CD8-positive, alpha-beta T cell (primary cell): ENCODE measurements at regions of chr7 and their contacts with region 1.

Region 1: GRCh38 chr7:17940302-17940883 is at the start of gene SNX13:
- DNase-seq: peak; percentile 75 to 95 (median 91)
- ATAC-seq: peak; percentile 93
- H3K4me3 ChIP-seq: peak within 1 kb of the TSS; percentile 67 to 94
- H3K4me3 Mint-ChIP-seq: peak within 1 kb of the TSS; percentile 98
- H3K27ac ChIP-seq: peak within 1 kb of the TSS; percentile 95 to 98
- H3K27ac Mint-ChIP-seq: peak within 1 kb of the TSS; percentile 99
- H3K4me1 ChIP-seq: peaks cover 29% of the 10 kb centered on the region
- H3K4me1 Mint-ChIP-seq: peaks cover 52% of the 10 kb centered on the region
- H3K27me3 ChIP-seq: no peaks in the 10 kb centered on the region
- H3K27me3 Mint-ChIP-seq: no peaks in the 10 kb centered on the region
- CTCF ChIP-seq: no peak
- total RNA-seq, gene SNX13: 22.0 to 23.9 TPM

Region 2: GRCh38 chr7:16420649-16421332 is 1519.6 kb before region 1 on chr7:
- CTCF ChIA-PET with region 1: no interaction called
- POLR2A ChIA-PET with region 1: no interaction called
- intact Hi-C with region 1: loop called (anchors 5 to 10 kb)
- DNase-seq: peak; percentile 46 to 95 (median 82)
- ATAC-seq: peak; percentile 92
- H3K4me3 ChIP-seq: peak overlapping the region; percentile 67 to 71
- H3K4me3 Mint-ChIP-seq: peak overlapping the region; percentile 87
- H3K27ac ChIP-seq: peak overlapping the region; percentile 68 to 89
- H3K27ac Mint-ChIP-seq: peak overlapping the region; percentile 93
- H3K4me1 ChIP-seq: peaks cover 15% of the 10 kb centered on the region
- H3K4me1 Mint-ChIP-seq: peaks cover 29% of the 10 kb centered on the region
- H3K27me3 ChIP-seq: no peaks in the 10 kb centered on the region
- H3K27me3 Mint-ChIP-seq: no peaks in the 10 kb centered on the region
- CTCF ChIP-seq: no peak

Region 3: GRCh38 chr7:17144322-17144721 is 796.1 kb before region 1 on chr7:
- CTCF ChIA-PET with region 1: no interaction called
- POLR2A ChIA-PET with region 1: no interaction called
- intact Hi-C with region 1: loop called in 1 of 2 experiments (anchors 2 kb)
- DNase-seq: peak in 8 of 9 experiments; percentile 25 to 68 (median 50)
- ATAC-seq: peak; percentile 76
- H3K4me3 ChIP-seq: no peak overlapping the region
- H3K4me3 Mint-ChIP-seq: peak overlapping the region; percentile 62
- H3K27ac ChIP-seq: no peak overlapping the region
- H3K27ac Mint-ChIP-seq: peak overlapping the region; percentile 53
- H3K4me1 ChIP-seq: peaks cover 26% of the 10 kb centered on the region
- H3K4me1 Mint-ChIP-seq: peaks cover 43% of the 10 kb centered on the region
- H3K27me3 ChIP-seq: no peaks in the 10 kb centered on the region
- H3K27me3 Mint-ChIP-seq: no peaks in the 10 kb centered on the region
- CTCF ChIP-seq: no peak

Region 4: DNA sequence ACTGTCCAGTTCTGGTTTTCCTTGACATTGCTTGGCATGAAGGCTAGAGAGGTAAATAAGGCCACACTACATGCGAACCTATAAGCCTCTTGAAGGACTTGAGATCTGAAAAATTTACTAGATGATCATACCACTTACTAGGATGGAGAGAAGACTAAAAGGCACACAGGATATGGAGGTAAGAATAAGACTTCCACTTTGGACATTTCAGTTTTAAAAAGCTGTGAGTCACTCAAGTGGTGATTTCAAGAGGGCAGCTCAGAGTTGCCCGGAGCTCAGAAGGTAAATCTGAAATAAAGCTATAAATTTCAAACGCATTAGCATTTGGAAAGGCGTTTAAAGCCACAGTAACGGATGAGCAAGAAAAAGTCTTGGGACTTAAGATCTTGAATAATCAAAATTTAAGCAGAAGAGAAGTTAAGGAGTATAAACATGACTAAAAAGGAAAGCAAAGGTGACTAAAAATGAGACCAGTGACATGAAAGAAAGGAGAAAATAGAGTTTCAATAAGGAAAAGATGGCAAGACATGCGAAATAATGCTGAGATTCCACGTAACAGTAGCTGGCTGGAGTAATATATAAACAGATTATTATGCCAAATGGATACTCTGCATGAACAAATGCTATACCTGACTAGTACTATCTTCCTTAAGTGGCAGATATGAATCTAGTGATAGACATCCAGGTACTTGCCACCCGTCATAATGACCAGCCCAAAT is 68.4 kb before region 1 on chr7:
- CTCF ChIA-PET with region 1: no interaction called
- POLR2A ChIA-PET with region 1: no interaction called
- intact Hi-C with region 1: loop called in 1 of 2 experiments (anchors 10 kb)
- DNase-seq: no peak
- ATAC-seq: no peak
- H3K4me3 ChIP-seq: no peak overlapping the region
- H3K4me3 Mint-ChIP-seq: no peak overlapping the region
- H3K27ac ChIP-seq: no peak overlapping the region
- H3K27ac Mint-ChIP-seq: no peak overlapping the region
- H3K4me1 ChIP-seq: no peaks in the 10 kb centered on the region
- H3K4me1 Mint-ChIP-seq: no peaks in the 10 kb centered on the region
- H3K27me3 ChIP-seq: no peaks in the 10 kb centered on the region
- H3K27me3 Mint-ChIP-seq: no peaks in the 10 kb centered on the region
- CTCF ChIP-seq: no peak

Region 5: DNA sequence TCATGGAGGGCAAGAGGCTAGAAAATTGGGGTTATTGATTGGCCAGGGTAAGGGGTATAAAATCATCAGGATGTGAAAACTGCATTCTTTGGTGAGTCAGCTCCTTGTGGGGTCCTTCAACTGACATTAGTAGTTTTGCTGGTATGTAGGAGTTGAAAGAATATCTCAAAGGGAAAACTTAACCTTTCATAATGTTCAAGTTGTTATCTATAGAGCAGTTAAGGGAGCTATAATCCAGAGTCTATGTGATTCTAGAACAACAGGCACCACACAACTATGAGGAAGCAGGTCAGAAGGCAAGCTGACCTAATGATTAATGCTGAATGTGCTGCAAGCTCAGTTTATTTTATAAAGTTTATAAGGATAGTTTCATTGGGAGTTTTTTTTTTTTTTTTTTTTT is 73.5 kb after region 1 on chr7:
- CTCF ChIA-PET with region 1: no interaction called
- POLR2A ChIA-PET with region 1: no interaction called
- intact Hi-C with region 1: no loop called
- DNase-seq: no peak
- ATAC-seq: no peak
- H3K4me3 ChIP-seq: no peak overlapping the region
- H3K4me3 Mint-ChIP-seq: no peak overlapping the region
- H3K27ac ChIP-seq: no peak overlapping the region
- H3K27ac Mint-ChIP-seq: no peak overlapping the region
- H3K4me1 ChIP-seq: no peaks in the 10 kb centered on the region
- H3K4me1 Mint-ChIP-seq: no peaks in the 10 kb centered on the region
- H3K27me3 ChIP-seq: no peaks in the 10 kb centered on the region
- H3K27me3 Mint-ChIP-seq: peaks cover 31% of the 10 kb centered on the region
- CTCF ChIP-seq: no peak

Region 6: GRCh38 chr7:19708397-19709248 is 1768.2 kb after region 1 on chr7 and contains the start of gene POLR1F:
- CTCF ChIA-PET with region 1: no interaction called
- POLR2A ChIA-PET with region 1: no interaction called
- intact Hi-C with region 1: loop called in 1 of 2 experiments (anchors 5 kb)
- DNase-seq: peak; percentile 88 to 97 (median 93)
- ATAC-seq: peak; percentile 95
- H3K4me3 ChIP-seq: peak within 1 kb of the TSS; percentile 86 to 88
- H3K4me3 Mint-ChIP-seq: peak within 1 kb of the TSS; percentile 99
- H3K27ac ChIP-seq: peak within 1 kb of the TSS; percentile 82 to 90
- H3K27ac Mint-ChIP-seq: peak within 1 kb of the TSS; percentile 97
- H3K4me1 ChIP-seq: peaks cover 31% of the 10 kb centered on the region
- H3K4me1 Mint-ChIP-seq: peaks cover 56% of the 10 kb centered on the region
- H3K27me3 ChIP-seq: no peaks in the 10 kb centered on the region
- H3K27me3 Mint-ChIP-seq: no peaks in the 10 kb centered on the region
- CTCF ChIP-seq: peak; percentile 73
- total RNA-seq, gene POLR1F: 35.0 to 37.7 TPM